ENCODE measurements at regions of chr6 and their contacts with region 1.

Region 1: GRCh38 chr6:134063966-134064445 is 11.6 kb upstream of the SLC2A12 start:
- DNase-seq: no peak
- ATAC-seq: peak; percentile 97
- H3K4me3 ChIP-seq: no peak overlapping the region
- H3K27ac ChIP-seq: no peak overlapping the region
- H3K4me1 ChIP-seq: no peaks in the 10 kb centered on the region
- H3K27me3 ChIP-seq: no peaks in the 10 kb centered on the region
- CTCF ChIP-seq: peak; percentile 86 to 94 (median 88)
- EP300 ChIP-seq: no peak
- POLR2A ChIP-seq: no peak
- RAD21 ChIP-seq: peak; percentile 80

Region 2: DNA sequence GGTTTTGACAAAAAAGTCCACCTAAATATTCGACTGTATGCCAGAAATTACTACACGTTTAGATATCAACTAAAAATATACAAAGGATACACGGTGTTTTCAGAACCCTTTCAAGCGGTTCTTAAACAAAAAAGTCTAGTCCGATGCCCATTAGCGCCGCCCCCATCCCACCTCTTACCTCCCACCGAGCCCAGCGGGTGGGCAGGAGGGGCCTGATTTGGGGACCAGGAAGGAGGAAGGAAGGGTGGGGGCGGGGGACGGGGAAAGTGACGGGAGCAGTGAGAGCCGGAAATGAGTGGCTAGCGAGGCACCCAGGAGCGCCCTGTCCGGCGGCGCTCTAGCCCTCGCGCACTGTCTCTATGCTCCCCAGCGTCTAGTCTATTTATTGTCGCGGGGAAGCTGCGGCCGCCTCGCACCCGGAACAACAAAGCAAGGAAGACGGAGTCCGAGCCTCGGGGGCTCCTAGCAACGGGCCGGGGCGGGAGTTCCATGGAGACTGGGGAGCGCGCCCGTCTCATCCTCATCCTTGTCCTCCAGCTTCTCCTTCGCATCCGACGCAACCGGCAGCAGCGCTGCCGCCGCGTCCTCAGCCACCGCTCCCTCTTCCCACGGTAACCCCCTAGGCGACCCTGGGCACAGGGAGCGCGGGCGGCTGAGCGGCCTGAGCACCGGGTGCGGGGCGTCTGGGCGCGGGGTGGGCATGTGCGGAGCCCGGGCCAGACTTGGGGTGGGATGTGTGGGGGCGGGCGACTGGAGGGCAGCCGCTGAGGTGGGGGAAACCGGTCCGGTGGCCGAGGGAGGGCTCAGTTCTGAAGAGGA is 111.0 kb before region 1 on chr6 and contains the start of gene TBPL1:
- CTCF ChIA-PET with region 1: interaction called, 11 read pairs
- POLR2A ChIA-PET with region 1: no interaction called
- RAD21 ChIA-PET with region 1: interaction called, 3 read pairs
- SMC1A ChIA-PET with region 1: interaction called, 6 read pairs
- in situ Hi-C with region 1: no loop called
- intact Hi-C with region 1: no loop called
- DNase-seq: peak; percentile 90
- ATAC-seq: peak; percentile 88
- H3K4me3 ChIP-seq: peak within 1 kb of the TSS; percentile 88
- H3K27ac ChIP-seq: peak within 1 kb of the TSS; percentile 74
- H3K4me1 ChIP-seq: peaks cover 11% of the 10 kb centered on the region
- H3K27me3 ChIP-seq: no peaks in the 10 kb centered on the region
- CTCF ChIP-seq: no peak
- EP300 ChIP-seq: peak in 1 of 2 experiments; percentile 62; a peak in 1 of 4 replicates
- POLR2A ChIP-seq: peak; percentile 94
- RAD21 ChIP-seq: no peak
- polyA plus RNA-seq, gene TBPL1: 34.9 to 52.5 TPM

Region 3: GRCh38 chr6:133973109-133973971 is 90.7 kb before region 1 on chr6:
- CTCF ChIA-PET with region 1: interaction called, 65 read pairs
- POLR2A ChIA-PET with region 1: no interaction called
- RAD21 ChIA-PET with region 1: interaction called, 17 read pairs
- SMC1A ChIA-PET with region 1: interaction called, 28 read pairs
- in situ Hi-C with region 1: loop called (anchors 5 kb)
- intact Hi-C with region 1: loop called (anchors 1 kb)
- DNase-seq: peak; percentile 28
- ATAC-seq: peak; percentile 75
- H3K4me3 ChIP-seq: no peak overlapping the region
- H3K27ac ChIP-seq: no peak overlapping the region
- H3K4me1 ChIP-seq: no peaks in the 10 kb centered on the region
- H3K27me3 ChIP-seq: no peaks in the 10 kb centered on the region
- CTCF ChIP-seq: peak; percentile 51 to 68 (median 65); a peak in 5 of 6 replicates
- EP300 ChIP-seq: no peak
- POLR2A ChIP-seq: no peak
- RAD21 ChIP-seq: peak; percentile 72

Region 4: GRCh38 chr6:134047673-134048072 is 16.3 kb before region 1 on chr6:
- CTCF ChIA-PET with region 1: interaction called, 23 read pairs
- POLR2A ChIA-PET with region 1: interaction called, 3 read pairs
- RAD21 ChIA-PET with region 1: interaction called, 3 read pairs
- SMC1A ChIA-PET with region 1: interaction called, 11 read pairs
- in situ Hi-C with region 1: no loop called
- intact Hi-C with region 1: no loop called
- DNase-seq: no peak
- ATAC-seq: no peak
- H3K4me3 ChIP-seq: no peak overlapping the region
- H3K27ac ChIP-seq: no peak overlapping the region
- H3K4me1 ChIP-seq: no peaks in the 10 kb centered on the region
- H3K27me3 ChIP-seq: peaks cover 0 to 3% of the 10 kb centered on the region in 2 experiments; a peak in 1 of 4 replicates
- CTCF ChIP-seq: no peak
- EP300 ChIP-seq: no peak
- POLR2A ChIP-seq: no peak
- RAD21 ChIP-seq: no peak

Region 5: GRCh38 chr6:134080171-134080795 is 16.3 kb after region 1 on chr6:
- CTCF ChIA-PET with region 1: interaction called, 22 read pairs
- POLR2A ChIA-PET with region 1: no interaction called
- RAD21 ChIA-PET with region 1: no interaction called
- SMC1A ChIA-PET with region 1: interaction called, 3 read pairs
- in situ Hi-C with region 1: no loop called
- intact Hi-C with region 1: no loop called
- DNase-seq: no peak
- ATAC-seq: peak; percentile 42; the same call in 2 of the 3 replicates
- H3K4me3 ChIP-seq: no peak overlapping the region; the same call in 1 of the 2 replicates
- H3K27ac ChIP-seq: no peak overlapping the region
- H3K4me1 ChIP-seq: peaks cover 8% of the 10 kb centered on the region; the same call in 1 of the 2 replicates
- H3K27me3 ChIP-seq: no peaks in the 10 kb centered on the region
- CTCF ChIP-seq: no peak
- EP300 ChIP-seq: no peak
- POLR2A ChIP-seq: no peak
- RAD21 ChIP-seq: no peak

Region 6: DNA sequence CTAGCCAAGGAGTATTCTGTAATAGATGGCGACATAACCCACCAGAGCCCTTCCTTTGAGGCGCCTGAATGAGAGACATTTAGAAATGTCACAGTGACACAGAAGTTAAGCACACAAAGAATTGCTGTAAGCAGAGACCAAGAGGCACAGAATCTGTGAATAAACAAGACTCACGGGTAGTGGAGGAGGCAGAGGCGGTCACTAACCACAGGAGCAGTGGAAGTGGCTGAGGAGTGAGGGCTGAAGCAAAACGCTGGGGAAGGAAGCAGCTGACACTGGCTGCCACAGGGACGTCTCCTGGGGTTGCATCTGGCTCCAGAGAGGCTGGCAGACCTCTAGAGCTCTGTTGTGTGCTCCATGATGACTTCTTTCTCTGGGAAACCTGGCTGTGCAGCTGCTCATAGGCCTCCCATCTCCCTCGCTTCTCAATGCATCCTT is 53.4 kb after region 1 on chr6:
- CTCF ChIA-PET with region 1: no interaction called
- POLR2A ChIA-PET with region 1: no interaction called
- RAD21 ChIA-PET with region 1: no interaction called
- SMC1A ChIA-PET with region 1: no interaction called
- in situ Hi-C with region 1: no loop called
- intact Hi-C with region 1: no loop called
- DNase-seq: no peak
- ATAC-seq: no peak; the same call in 2 of the 3 replicates
- H3K4me3 ChIP-seq: no peak overlapping the region
- H3K27ac ChIP-seq: no peak overlapping the region
- H3K4me1 ChIP-seq: no peaks in the 10 kb centered on the region
- H3K27me3 ChIP-seq: peaks cover 0 to 3% of the 10 kb centered on the region in 2 experiments; a peak in 2 of 4 replicates
- CTCF ChIP-seq: no peak
- EP300 ChIP-seq: no peak
- POLR2A ChIP-seq: no peak
- RAD21 ChIP-seq: no peak

Region 7: DNA sequence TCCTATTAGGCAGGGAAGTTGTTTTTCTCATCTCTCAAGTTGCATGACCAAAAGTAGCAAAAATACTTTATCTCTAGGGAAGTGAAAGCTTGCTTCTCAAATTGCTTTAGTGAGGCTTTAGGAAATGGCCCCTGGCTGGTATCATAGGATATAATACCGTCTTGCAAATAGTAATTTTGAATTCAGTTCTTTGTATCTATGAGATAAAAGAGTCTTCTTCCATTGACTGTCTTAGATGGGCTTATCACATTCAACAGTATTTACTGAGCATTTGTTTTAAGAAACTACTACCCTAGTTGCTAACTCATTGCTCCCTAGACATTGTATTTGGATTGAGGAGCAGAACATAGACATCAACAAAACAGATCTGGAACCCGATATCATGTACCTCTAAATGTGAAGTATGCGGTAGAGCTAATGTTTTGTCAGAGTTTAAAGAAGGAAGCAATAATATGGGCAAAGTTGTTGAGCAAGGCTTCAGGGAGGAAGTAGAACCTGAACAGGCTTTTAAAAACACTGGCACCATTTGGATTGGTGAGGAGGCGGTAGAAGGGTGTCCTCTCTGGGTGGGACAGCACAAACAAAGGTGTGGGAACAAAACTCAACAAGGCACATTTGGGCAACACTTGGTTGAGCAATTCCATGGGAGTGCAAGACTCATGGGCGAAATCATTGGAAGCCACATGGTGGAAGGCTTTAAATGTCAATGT is 152.4 kb after region 1 on chr6:
- CTCF ChIA-PET with region 1: no interaction called
- POLR2A ChIA-PET with region 1: no interaction called
- RAD21 ChIA-PET with region 1: no interaction called
- SMC1A ChIA-PET with region 1: no interaction called
- in situ Hi-C with region 1: no loop called
- intact Hi-C with region 1: no loop called
- DNase-seq: no peak
- ATAC-seq: no peak
- H3K4me3 ChIP-seq: no peak overlapping the region
- H3K27ac ChIP-seq: no peak overlapping the region
- H3K4me1 ChIP-seq: no peaks in the 10 kb centered on the region
- H3K27me3 ChIP-seq: no peaks in the 10 kb centered on the region
- CTCF ChIP-seq: no peak
- EP300 ChIP-seq: no peak
- POLR2A ChIP-seq: no peak
- RAD21 ChIP-seq: no peak

Region 8: GRCh38 chr6:134413241-134413643 is 349.2 kb after region 1 on chr6:
- CTCF ChIA-PET with region 1: no interaction called
- POLR2A ChIA-PET with region 1: no interaction called
- RAD21 ChIA-PET with region 1: no interaction called
- SMC1A ChIA-PET with region 1: no interaction called
- in situ Hi-C with region 1: no loop called
- intact Hi-C with region 1: no loop called
- DNase-seq: no peak
- ATAC-seq: no peak
- H3K4me3 ChIP-seq: no peak overlapping the region
- H3K27ac ChIP-seq: no peak overlapping the region
- H3K4me1 ChIP-seq: no peaks in the 10 kb centered on the region
- H3K27me3 ChIP-seq: peaks cover 0 to 3% of the 10 kb centered on the region in 2 experiments; a peak in 3 of 4 replicates
- CTCF ChIP-seq: no peak
- EP300 ChIP-seq: no peak
- POLR2A ChIP-seq: no peak
- RAD21 ChIP-seq: no peak

Region 9: GRCh38 chr6:134657751-134658522 is 593.9 kb after region 1 on chr6:
- CTCF ChIA-PET with region 1: no interaction called
- POLR2A ChIA-PET with region 1: no interaction called
- RAD21 ChIA-PET with region 1: no interaction called
- SMC1A ChIA-PET with region 1: no interaction called
- in situ Hi-C with region 1: no loop called
- intact Hi-C with region 1: no loop called
- DNase-seq: no peak
- ATAC-seq: no peak
- H3K4me3 ChIP-seq: no peak overlapping the region
- H3K27ac ChIP-seq: no peak overlapping the region
- H3K4me1 ChIP-seq: no peaks in the 10 kb centered on the region
- H3K27me3 ChIP-seq: no peaks in the 10 kb centered on the region
- CTCF ChIP-seq: no peak
- EP300 ChIP-seq: no peak
- POLR2A ChIP-seq: no peak
- RAD21 ChIP-seq: no peak